Ascending aorta (tissue), 2 donors: ENCODE measurements at regions of chr16 and their contacts with region 1.

Region 1: DNA sequence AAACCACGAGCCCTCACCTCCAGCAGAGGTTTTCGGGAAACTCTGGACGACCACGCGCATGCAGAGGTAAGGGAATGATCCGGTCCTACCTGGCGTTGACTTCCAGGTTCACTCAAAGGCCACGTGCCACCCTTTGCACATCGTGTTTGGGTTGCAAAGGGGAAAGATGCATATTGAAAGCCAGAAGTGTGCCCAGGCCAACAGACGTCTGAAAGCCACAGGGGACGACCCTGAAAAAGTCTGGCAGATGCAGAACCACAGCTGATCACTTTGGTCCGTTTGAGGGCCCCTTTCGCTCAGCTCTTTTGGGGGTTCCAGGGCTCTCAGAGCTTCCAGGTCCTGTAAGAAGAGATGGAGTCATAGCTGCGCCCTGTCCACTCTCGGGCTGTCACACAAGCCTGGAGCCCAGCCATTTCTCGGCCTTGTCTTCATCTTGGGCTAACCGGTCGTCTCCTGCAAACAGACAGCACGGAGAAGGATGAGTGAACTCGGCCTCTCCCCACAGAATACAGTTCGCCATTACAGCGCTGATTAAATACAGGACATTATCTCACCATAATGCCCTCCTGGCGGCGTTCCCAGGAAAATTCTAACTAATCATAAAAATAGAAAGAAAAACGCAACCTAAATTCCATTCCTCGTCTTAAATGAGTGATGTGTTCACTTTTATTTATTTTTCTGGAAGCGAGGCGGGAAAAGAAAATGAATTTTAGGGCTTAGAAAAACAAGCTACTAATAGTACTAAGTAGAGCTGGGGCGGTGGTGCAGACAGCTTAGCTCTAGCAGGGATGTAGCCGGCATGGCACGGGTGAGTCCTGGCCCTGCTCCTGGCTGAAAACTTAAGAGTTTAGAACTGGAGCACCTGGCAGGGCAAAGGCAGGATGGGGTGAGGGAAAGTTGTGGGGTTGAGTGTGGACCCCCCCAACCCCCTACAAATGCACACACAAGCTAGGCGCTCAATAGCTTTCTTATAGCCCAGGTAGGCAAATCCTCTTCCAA is 45.5 kb upstream of the ZFHX3 start:
- DNase-seq: peak in 1 of 2 donors; percentile 89
- H3K4me3 ChIP-seq: peak overlapping the region; percentile 5 to 61
- H3K27ac ChIP-seq: peak overlapping the region; percentile 93 to 95
- H3K4me1 ChIP-seq: peaks cover 6 to 32% of the 10 kb centered on the region in 2 donors
- H3K27me3 ChIP-seq: no peaks in the 10 kb centered on the region
- CTCF ChIP-seq: no peak

Region 2: DNA sequence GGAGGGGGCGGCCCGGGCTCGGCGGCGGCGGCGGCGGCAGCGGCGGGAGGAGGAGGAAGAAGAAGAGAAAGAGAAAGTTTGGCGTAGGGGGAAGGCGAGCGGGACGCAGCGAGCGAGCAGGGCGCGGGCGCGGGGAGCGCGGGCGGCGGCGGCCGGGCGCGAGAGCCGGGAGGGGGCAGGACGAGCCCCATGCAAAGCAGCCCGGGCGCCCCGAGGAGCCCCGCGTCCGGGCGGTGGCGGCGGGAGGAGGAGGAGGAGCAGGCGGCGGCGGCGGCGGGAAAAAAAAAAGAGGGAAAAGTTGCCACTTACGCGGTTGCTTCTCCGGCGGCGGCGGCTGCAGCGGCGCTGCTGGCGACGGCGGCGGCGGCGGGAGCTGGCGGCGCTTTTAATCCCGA is 35.2 kb before region 1 on chr16:
- intact Hi-C with region 1: loop called (anchors 5 kb)
- DNase-seq: peak in 1 of 2 donors; percentile 70
- H3K4me3 ChIP-seq: peak overlapping the region; percentile 85 to 88
- H3K27ac ChIP-seq: peak overlapping the region; percentile 98 to 99
- H3K4me1 ChIP-seq: peaks cover 4 to 19% of the 10 kb centered on the region in 2 donors
- H3K27me3 ChIP-seq: no peaks in the 10 kb centered on the region
- CTCF ChIP-seq: no peak

Region 3: GRCh38 chr16:73068541-73069401 is 24.7 kb before region 1 on chr16:
- intact Hi-C with region 1: loop called (anchors 1 kb)
- DNase-seq: peak; percentile 92 to 97
- H3K4me3 ChIP-seq: peak overlapping the region; percentile 27 to 50
- H3K27ac ChIP-seq: peak overlapping the region; percentile 98 to 99
- H3K4me1 ChIP-seq: peaks cover 23 to 51% of the 10 kb centered on the region in 2 donors
- H3K27me3 ChIP-seq: no peaks in the 10 kb centered on the region
- CTCF ChIP-seq: peak in 1 of 3 experiments; percentile 2

Region 4: DNA sequence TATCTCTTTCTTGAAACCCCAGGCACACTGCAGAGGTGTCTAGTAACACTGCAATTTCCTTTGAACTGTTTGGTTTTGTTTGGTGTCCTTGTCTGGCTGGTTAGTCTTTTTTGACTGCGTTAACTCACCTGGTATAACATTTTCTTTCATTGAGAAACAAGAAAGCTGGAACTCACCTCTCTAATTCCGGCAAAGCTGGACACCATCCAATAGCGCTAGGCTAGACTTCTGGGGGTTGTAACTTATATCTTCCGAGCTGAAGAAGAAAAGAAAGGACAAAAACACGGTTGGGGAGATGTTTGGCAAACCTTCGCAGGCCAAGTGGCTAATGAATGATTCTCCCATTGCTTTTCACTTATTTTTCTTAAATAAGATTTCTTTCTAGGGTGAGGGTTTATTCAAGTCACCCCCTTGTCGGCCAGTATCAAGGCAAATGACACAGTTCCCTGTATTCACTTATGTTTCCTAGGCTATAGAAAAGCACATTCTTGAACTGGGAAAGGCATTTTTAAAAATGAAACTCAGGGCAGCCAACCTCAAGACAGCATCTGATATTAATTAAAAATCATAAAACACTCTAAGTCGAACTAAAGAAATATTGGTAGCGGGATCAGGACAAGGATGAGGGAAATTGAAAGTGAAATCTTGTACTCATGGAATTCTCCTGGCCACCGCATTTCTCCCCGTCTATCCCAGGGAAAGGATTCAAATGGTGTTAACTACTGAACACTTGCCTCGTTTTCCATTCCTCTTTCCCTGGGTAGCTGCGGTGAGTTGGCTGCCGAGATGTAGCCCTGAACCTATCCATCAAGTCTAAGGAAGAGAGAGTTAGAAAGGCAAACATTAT is 50.4 kb after region 1 on chr16:
- intact Hi-C with region 1: loop called (anchors 2 kb)
- DNase-seq: no peak
- H3K4me3 ChIP-seq: peak overlapping the region; percentile 47 to 68
- H3K27ac ChIP-seq: peak overlapping the region; percentile 80 to 89
- H3K4me1 ChIP-seq: peaks cover 0 to 11% of the 10 kb centered on the region in 2 donors
- H3K27me3 ChIP-seq: no peaks in the 10 kb centered on the region
- CTCF ChIP-seq: no peak

Region 5: GRCh38 chr16:73172241-73172972 is 79.0 kb after region 1 on chr16:
- intact Hi-C with region 1: loop called (anchors 2 kb)
- DNase-seq: peak in 1 of 2 donors; percentile 86
- H3K4me3 ChIP-seq: peak overlapping the region in 1 of 2 donors; percentile 23
- H3K27ac ChIP-seq: peak overlapping the region; percentile 91 to 94
- H3K4me1 ChIP-seq: peaks cover 3 to 21% of the 10 kb centered on the region in 2 donors
- H3K27me3 ChIP-seq: no peaks in the 10 kb centered on the region
- CTCF ChIP-seq: peak in 1 of 3 experiments; percentile 29

Region 6: GRCh38 chr16:73697336-73697735 is 603.9 kb after region 1 on chr16:
- intact Hi-C with region 1: no loop called
- DNase-seq: no peak
- H3K4me3 ChIP-seq: no peak overlapping the region
- H3K27ac ChIP-seq: no peak overlapping the region
- H3K4me1 ChIP-seq: peaks cover 0 to 3% of the 10 kb centered on the region in 2 donors
- H3K27me3 ChIP-seq: no peaks in the 10 kb centered on the region
- CTCF ChIP-seq: no peak